CD8-positive, alpha-beta T cell (primary cell): ENCODE measurements at regions of chr17 and their contacts with region 1.

Region 1: DNA sequence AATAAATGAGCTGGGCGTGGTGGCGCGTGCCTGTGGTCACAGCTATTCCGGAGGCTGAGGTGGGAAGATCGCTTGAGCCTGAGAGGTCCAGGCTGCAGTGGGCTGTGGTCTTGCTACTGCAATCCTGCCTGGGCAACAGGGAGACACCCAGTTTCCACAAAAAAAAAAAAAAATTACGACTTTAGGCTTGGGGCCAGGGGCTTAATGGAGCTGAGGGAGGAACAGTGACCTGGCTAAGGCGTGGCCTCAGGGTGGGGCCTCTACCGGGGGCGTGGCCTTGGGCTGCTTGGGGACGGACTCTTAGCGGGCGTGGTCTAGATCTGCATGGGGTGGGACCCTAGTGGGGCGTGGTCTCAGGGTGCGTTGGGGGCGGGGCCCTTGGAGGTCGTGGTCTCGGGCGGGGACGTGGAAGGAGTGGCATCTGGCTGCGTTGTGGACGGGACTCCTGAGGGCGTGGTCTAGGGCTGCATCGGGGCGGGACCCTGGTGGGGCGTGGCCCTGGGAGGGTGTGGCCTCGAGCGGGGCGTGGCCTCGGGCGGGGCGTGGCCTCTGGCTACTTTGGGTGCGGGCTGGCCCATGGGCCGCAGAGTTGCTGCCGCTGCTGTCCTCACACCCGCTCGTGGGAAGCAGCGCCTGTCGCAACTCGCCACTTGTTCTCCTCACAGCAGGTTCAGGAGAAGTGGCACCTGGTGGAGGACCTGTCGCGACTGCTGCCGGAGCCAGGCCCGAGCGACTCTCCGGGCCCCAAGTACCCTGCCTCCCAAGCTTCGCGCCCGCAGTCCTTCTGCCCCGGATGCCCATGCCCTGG is 5.8 kb upstream of the C17orf99 start:
- DNase-seq: peak; percentile 83 to 96 (median 93)
- ATAC-seq: peak; percentile 88
- H3K4me3 ChIP-seq: peak overlapping the region in 1 of 2 experiments; percentile 20
- H3K4me3 Mint-ChIP-seq: peak overlapping the region; percentile 61
- H3K27ac ChIP-seq: peak overlapping the region; percentile 16 to 51
- H3K27ac Mint-ChIP-seq: peak overlapping the region; percentile 91
- H3K4me1 ChIP-seq: peaks cover 81% of the 10 kb centered on the region
- H3K4me1 Mint-ChIP-seq: peaks cover 70% of the 10 kb centered on the region
- H3K27me3 ChIP-seq: no peaks in the 10 kb centered on the region
- H3K27me3 Mint-ChIP-seq: no peaks in the 10 kb centered on the region
- CTCF ChIP-seq: no peak

Region 2: GRCh38 chr17:78112518-78113226 is 27.7 kb before region 1 on chr17:
- CTCF ChIA-PET with region 1: interaction called, 200 read pairs
- POLR2A ChIA-PET with region 1: interaction called, 583 read pairs
- intact Hi-C with region 1: no loop called
- DNase-seq: peak; percentile 62 to 91 (median 78)
- ATAC-seq: peak; percentile 67
- H3K4me3 ChIP-seq: no peak overlapping the region
- H3K4me3 Mint-ChIP-seq: peak overlapping the region; percentile 42
- H3K27ac ChIP-seq: peak overlapping the region in 1 of 2 experiments; percentile 74
- H3K27ac Mint-ChIP-seq: peak overlapping the region; percentile 90
- H3K4me1 ChIP-seq: peaks cover 45% of the 10 kb centered on the region
- H3K4me1 Mint-ChIP-seq: peaks cover 42% of the 10 kb centered on the region
- H3K27me3 ChIP-seq: no peaks in the 10 kb centered on the region
- H3K27me3 Mint-ChIP-seq: no peaks in the 10 kb centered on the region
- CTCF ChIP-seq: peak; percentile 99

Region 3: GRCh38 chr17:78168242-78168902 is 28.0 kb after region 1 on chr17 and contains the start of gene SYNGR2:
- CTCF ChIA-PET with region 1: interaction called, 7 read pairs
- POLR2A ChIA-PET with region 1: interaction called, 4 read pairs
- intact Hi-C with region 1: loop called (anchors 1 kb)
- DNase-seq: peak; percentile 74 to 93 (median 86)
- ATAC-seq: peak; percentile 89
- H3K4me3 ChIP-seq: peak within 1 kb of the TSS; percentile 52 to 59
- H3K4me3 Mint-ChIP-seq: peak within 1 kb of the TSS; percentile 69
- H3K27ac ChIP-seq: peak within 1 kb of the TSS; percentile 52 to 73
- H3K27ac Mint-ChIP-seq: peak within 1 kb of the TSS; percentile 79
- H3K4me1 ChIP-seq: peaks cover 30% of the 10 kb centered on the region
- H3K4me1 Mint-ChIP-seq: peaks cover 36% of the 10 kb centered on the region
- H3K27me3 ChIP-seq: no peaks in the 10 kb centered on the region
- H3K27me3 Mint-ChIP-seq: no peaks in the 10 kb centered on the region
- CTCF ChIP-seq: no peak
- total RNA-seq, gene SYNGR2: 36.4 to 36.7 TPM